ENCODE measurements at regions of chr14 and their contacts with region 1.

Region 1: GRCh38 chr14:24135834-24136542 is at the start of gene PSME1:
- DNase-seq: peak; percentile 98
- total RNA-seq, gene PSME1: 61.3 TPM

Region 2: DNA sequence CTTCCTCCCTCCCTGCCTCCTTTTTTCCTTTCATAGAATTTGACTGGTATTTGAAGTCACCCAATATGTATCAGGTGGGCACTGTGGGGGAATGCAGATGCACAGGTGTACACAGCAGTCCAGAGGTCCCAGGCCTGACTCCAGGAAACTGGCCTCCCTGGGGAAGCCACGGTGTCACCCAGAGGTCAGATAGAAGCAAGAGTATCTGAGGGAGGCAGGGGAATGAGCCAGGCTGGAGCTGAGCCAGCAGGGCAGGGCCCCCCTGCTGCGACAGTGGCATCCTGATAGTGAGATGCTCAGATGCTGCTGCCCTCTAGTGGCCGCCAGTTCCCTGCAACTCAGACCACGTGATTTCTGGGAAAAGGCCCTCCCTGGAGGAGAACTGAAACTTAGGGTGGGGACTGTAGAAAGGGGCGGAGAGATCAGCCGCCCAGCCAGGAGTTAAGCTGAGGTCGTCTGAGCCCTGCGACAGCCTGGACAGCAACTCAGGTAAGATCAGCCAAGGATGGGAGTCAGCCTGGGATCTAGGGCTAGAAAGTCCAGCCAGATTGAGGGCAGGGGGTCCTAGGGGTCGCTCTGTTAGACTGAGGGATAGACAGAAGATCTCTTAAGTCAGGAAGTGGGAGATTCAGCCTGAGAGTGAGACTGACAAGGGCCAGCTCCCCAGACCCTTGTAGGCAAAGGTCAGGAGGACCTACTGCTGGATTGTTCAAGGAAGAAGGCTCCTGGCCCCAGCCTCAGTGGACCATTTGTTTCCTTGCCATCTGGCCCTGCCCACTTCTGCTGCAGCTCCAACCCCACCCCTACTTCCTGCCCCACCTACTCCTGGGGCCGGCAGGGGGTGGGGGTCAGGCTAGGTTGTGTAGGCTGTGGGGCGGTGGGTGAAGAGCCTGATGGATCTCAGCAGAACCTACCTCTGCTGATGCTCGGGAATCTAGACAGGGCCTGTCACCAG is 25.1 kb after region 1 on chr14 and contains the start of gene IRF9:
- intact Hi-C with region 1: loop called (anchors 2 kb)
- DNase-seq: peak; percentile 98
- total RNA-seq, gene IRF9: 44.8 TPM

Measured in cardiac septum (tissue), 1 donor.